Sciatic nerve (tissue), 2 donors: ENCODE measurements at regions of chr11 and their contacts with region 1.

Region 1: GRCh38 chr11:113373981-113374560 is 13.5 kb upstream of the ANKK1 start:
- DNase-seq: no peak
- ATAC-seq: no peak

Region 2: DNA sequence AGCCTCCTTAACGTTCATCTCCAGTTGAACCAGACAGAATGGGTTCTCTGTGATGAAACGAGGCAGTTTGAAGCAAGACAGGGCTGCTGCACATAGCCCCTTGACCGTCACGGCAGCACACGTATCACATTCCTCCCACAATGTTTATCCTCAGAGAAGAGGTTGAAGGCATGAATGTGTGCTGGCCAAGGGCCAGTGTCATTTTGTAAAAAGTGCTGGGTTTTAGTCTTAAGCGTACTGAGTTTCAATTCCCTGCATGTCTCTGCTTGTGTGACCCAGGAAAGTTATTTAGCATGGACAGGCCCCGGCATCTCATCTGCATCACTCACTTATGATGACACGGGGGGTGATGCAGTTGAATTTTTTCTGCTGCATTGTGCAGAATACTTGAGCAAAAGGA is 28.1 kb before region 1 on chr11:
- intact Hi-C with region 1: loop called (anchors 2 kb)
- DNase-seq: no peak
- ATAC-seq: no peak

Region 3: GRCh38 chr11:115267871-115268270 is 1893.8 kb after region 1 on chr11:
- intact Hi-C with region 1: no loop called
- DNase-seq: no peak
- ATAC-seq: no peak